ENCODE measurements at regions of chr3 and their contacts with region 1.

Region 1: GRCh38 chr3:49906004-49906743 is 2.5 kb upstream of the MST1R start:
- DNase-seq: peak; percentile 51 to 52
- H3K4me3 ChIP-seq: no peak overlapping the region
- H3K27ac ChIP-seq: peak overlapping the region; percentile 5 to 58 (median 33)
- H3K4me1 ChIP-seq: peaks cover 6 to 37% of the 10 kb centered on the region in 2 donors
- H3K27me3 ChIP-seq: no peaks in the 10 kb centered on the region
- CTCF ChIP-seq: peak; percentile 36 to 74 (median 67)
- POLR2A ChIP-seq: no peak

Region 2: DNA sequence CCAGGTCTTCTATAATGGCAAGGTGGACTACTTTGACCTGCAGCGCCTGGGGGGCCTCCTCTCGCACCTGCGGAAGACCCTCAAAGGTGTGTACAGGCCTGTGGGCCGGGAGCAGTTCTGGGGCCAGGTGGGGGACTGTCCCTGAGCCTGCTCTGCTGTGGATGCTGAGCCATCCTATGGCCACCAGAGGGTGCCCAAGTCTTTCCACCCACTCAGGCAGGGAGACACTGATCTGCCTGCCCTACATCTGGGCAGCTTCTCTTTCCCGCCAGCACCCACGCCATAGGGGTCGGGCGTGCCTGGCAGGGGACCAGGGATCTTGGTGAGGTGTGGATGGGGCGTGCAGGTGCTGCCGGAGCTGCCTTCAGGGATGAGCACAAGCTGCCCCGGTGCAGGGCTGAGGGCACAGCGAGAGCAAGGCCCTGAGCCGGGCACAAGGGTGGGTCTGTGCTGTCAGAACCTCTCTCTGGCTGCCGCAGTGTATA is 202.7 kb before region 1 on chr3:
- intact Hi-C with region 1: loop called (anchors 10 kb)
- DNase-seq: peak; percentile 62 to 64
- H3K4me3 ChIP-seq: no peak overlapping the region
- H3K27ac ChIP-seq: no peak overlapping the region
- H3K4me1 ChIP-seq: no peaks in the 10 kb centered on the region
- H3K27me3 ChIP-seq: no peaks in the 10 kb centered on the region
- CTCF ChIP-seq: peak in 5 of 6 experiments; percentile 60 to 79 (median 68)
- POLR2A ChIP-seq: no peak

Region 3: GRCh38 chr3:49802719-49803464 is 103.3 kb before region 1 on chr3 and contains the start of gene INKA1:
- intact Hi-C with region 1: loop called (anchors 5 kb)
- DNase-seq: peak; percentile 90 to 91
- H3K4me3 ChIP-seq: peak within 1 kb of the TSS; percentile 60 to 72 (median 60)
- H3K27ac ChIP-seq: peak within 1 kb of the TSS; percentile 50 to 96 (median 85)
- H3K4me1 ChIP-seq: peaks cover 12 to 37% of the 10 kb centered on the region in 2 donors
- H3K27me3 ChIP-seq: no peaks in the 10 kb centered on the region
- CTCF ChIP-seq: peak in 5 of 6 experiments; percentile 59 to 96 (median 79)
- POLR2A ChIP-seq: peak in 1 of 2 donors; percentile 52
- total RNA-seq, gene INKA1: 3.1 to 7.3 (median 5.6) TPM

Region 4: GRCh38 chr3:50112462-50112861 is 206.3 kb after region 1 on chr3:
- intact Hi-C with region 1: no loop called
- DNase-seq: no peak
- H3K4me3 ChIP-seq: no peak overlapping the region
- H3K27ac ChIP-seq: no peak overlapping the region
- H3K4me1 ChIP-seq: no peaks in the 10 kb centered on the region
- H3K27me3 ChIP-seq: no peaks in the 10 kb centered on the region
- CTCF ChIP-seq: no peak
- POLR2A ChIP-seq: no peak

Region 5: GRCh38 chr3:50205414-50206276 is 299.5 kb after region 1 on chr3:
- intact Hi-C with region 1: no loop called
- DNase-seq: peak; percentile 38 to 67
- H3K4me3 ChIP-seq: peak overlapping the region in 2 of 3 donors; percentile 27 to 35
- H3K27ac ChIP-seq: no peak overlapping the region
- H3K4me1 ChIP-seq: peaks cover 15 to 23% of the 10 kb centered on the region in 2 donors
- H3K27me3 ChIP-seq: no peaks in the 10 kb centered on the region
- CTCF ChIP-seq: no peak
- POLR2A ChIP-seq: no peak